Prostate gland (tissue), 2 donors: ENCODE measurements at regions of chr10 and their contacts with region 1.

Region 1: DNA sequence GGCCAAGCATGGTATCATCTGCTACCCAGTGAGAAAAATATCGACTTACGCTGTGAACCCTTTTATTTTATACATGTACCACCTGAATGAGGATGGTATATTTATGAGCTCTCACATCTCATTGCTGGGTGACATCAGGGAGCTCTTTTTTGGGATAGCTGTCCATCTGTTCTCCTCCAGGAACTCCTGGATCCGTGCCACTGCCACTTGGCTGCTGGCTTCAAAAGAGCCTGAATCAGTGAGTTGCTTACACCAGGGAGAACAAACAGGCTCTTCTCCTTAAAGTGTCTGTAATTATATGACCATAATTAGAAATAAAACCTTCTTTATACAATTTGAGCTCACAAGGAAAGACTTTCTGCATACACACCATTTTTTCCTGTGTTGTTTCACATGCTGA is 106.2 kb downstream of the KAT6B start:
- DNase-seq: no peak
- H3K4me3 ChIP-seq: no peak overlapping the region
- H3K27ac ChIP-seq: peak overlapping the region in 1 of 2 donors; percentile 4
- H3K4me1 ChIP-seq: no peaks in the 10 kb centered on the region
- H3K27me3 ChIP-seq: no peaks in the 10 kb centered on the region
- CTCF ChIP-seq: no peak
- POLR2A ChIP-seq: no peak

Region 2: DNA sequence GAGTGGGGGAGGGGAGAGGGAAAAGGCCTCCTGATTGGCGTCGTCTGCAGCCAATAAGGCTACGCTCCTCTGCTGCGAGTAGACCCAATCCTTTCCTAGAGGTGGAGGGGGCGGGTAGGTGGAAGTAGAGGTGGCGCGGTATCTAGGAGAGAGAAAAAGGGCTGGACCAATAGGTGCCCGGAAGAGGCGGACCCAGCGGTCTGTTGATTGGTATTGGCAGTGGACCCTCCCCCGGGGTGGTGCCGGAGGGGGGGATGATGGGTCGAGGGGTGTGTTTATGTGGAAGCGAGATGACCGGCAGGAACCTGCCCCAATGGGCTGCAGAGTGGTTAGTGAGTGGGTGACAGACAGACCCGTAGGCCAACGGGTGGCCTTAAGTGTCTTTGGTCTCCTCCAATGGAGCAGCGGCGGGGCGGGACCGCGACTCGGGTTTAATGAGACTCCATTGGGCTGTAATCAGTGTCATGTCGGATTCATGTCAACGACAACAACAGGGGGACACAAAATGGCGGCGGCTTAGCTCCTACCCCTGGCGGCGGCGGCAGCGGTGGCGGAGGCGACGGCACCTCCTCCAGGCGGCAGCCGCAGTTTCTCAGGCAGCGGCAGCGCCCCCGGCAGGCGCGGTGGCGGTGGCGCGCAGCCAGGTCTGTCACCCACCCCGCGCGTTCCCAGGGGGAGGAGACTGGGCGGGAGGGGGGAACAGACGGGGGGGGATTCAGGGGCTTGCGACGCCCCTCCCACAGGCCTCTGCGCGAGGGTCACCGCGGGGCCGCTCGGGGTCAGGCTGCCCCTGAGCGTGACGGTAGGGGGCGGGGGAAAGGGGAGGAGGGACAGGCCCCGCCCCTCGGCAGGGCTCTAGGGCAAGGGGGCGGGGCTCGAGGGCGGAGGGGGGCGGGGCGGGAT is 106.3 kb before region 1 on chr10 and contains the start of gene KAT6B:
- intact Hi-C with region 1: loop called (anchors 5 kb)
- DNase-seq: peak; percentile 100
- H3K4me3 ChIP-seq: peak within 1 kb of the TSS; percentile 89 to 98
- H3K27ac ChIP-seq: peak within 1 kb of the TSS; percentile 99
- H3K4me1 ChIP-seq: peaks cover 20% of the 10 kb centered on the region
- H3K27me3 ChIP-seq: no peaks in the 10 kb centered on the region
- CTCF ChIP-seq: peak in 1 of 4 experiments; percentile 50
- POLR2A ChIP-seq: peak; percentile 69
- total RNA-seq, gene KAT6B: 28.0 to 97.8 TPM

Region 3: DNA sequence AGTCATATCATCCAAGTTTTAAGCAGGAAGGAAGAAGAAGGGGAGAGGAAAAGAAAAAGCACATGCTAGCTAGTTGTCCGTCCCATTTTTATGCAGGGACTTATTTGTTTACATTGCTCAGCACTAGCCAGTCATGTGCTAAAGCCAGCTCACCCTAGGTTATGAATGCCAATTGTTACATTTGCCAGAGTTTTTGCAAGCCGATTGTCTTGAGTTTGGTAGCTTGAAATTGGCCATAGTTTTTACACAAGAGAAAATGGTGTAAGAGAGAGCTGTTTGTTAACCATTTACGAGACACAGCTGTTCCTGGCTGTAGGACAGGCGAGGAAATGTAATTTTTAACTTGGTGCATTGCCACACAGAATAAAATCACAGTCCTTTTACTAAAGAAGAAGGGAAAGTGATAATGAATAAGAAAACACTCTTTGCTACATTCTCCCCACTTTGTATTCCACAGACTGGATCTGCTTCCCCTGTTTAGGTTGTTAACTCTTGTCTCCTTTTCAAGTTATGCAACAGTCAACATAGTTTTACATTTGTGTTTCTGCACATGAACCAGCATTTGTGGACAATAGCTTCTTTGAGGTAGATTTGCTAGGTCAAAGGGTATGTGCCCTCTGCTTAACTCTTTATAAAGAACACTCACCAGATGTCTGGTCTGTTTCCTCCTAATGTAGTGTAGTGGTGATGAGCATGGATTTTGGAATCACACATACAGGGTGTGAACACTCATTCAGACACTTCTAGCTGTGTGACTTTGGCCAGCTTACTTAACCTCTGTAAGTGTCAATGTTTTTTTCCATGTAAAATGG is 856.0 kb after region 1 on chr10:
- intact Hi-C with region 1: no loop called
- DNase-seq: peak; percentile 55
- H3K4me3 ChIP-seq: no peak overlapping the region
- H3K27ac ChIP-seq: peak overlapping the region; percentile 45 to 64
- H3K4me1 ChIP-seq: peaks cover 4% of the 10 kb centered on the region
- H3K27me3 ChIP-seq: no peaks in the 10 kb centered on the region
- CTCF ChIP-seq: no peak
- POLR2A ChIP-seq: no peak